ENCODE measurements at regions of chr3 and their contacts with region 1.

Region 1: GRCh38 chr3:156497326-156497725 is 57.6 kb downstream of the SSR3 start:
- DNase-seq: no peak
- ATAC-seq: no peak
- H3K4me3 ChIP-seq: no peak overlapping the region
- H3K27ac ChIP-seq: no peak overlapping the region
- H3K4me1 ChIP-seq: no peaks in the 10 kb centered on the region
- H3K27me3 ChIP-seq: no peaks in the 10 kb centered on the region
- CTCF ChIP-seq: no peak
- EP300 ChIP-seq: no peak
- POLR2A ChIP-seq: no peak
- RAD21 ChIP-seq: no peak

Region 2: GRCh38 chr3:156519758-156520162 is 22.4 kb after region 1 on chr3:
- CTCF ChIA-PET with region 1: no interaction called
- POLR2A ChIA-PET with region 1: no interaction called
- in situ Hi-C with region 1: no loop called
- intact Hi-C with region 1: loop called (anchors 1 kb)
- DNase-seq: no peak
- ATAC-seq: peak; percentile 25; the same call in 1 of the 3 replicates
- H3K4me3 ChIP-seq: no peak overlapping the region
- H3K27ac ChIP-seq: no peak overlapping the region
- H3K4me1 ChIP-seq: peaks cover 14% of the 10 kb centered on the region
- H3K27me3 ChIP-seq: no peaks in the 10 kb centered on the region
- CTCF ChIP-seq: no peak
- EP300 ChIP-seq: no peak
- POLR2A ChIP-seq: no peak
- RAD21 ChIP-seq: no peak